T-cell (primary cell): ENCODE measurements at regions of chr4 and their contacts with region 1.

Region 1: DNA sequence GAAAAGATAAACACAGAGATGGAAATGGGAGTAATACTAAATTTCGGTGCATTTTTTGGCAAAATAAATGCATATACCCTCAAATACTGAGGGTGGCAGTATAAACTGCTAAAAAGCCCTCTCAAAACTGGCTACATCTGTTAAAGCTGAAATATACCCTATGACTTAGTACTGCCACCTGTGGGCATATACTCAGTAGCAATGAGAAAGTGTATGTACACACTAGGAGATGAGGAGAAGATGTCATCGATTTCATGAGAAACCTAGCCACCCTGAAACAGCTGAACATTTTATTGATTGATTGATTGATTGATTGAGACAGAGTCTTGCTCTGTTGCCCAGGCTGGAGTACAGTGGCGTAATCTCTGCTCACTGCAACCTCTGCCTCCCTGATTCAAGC is 12.2 kb upstream of the TMEM128 start:
- DNase-seq: peak in 8 of 35 experiments; percentile 8 to 79 (median 19)
- ATAC-seq: peak; percentile 92 to 100 (median 96)
- H3K4me3 ChIP-seq: no peak overlapping the region
- H3K4me3 Mint-ChIP-seq: no peak overlapping the region
- H3K27ac ChIP-seq: no peak overlapping the region
- H3K27ac Mint-ChIP-seq: peak overlapping the region; percentile 16 to 61
- H3K4me1 ChIP-seq: peaks cover 0 to 7% of the 10 kb centered on the region in 2 experiments
- H3K4me1 Mint-ChIP-seq: peaks cover 0 to 11% (median 10%) of the 10 kb centered on the region in 3 donors
- H3K27me3 ChIP-seq: no peaks in the 10 kb centered on the region
- H3K27me3 Mint-ChIP-seq: peaks cover 0 to 3% of the 10 kb centered on the region in 2 donors

Region 2: DNA sequence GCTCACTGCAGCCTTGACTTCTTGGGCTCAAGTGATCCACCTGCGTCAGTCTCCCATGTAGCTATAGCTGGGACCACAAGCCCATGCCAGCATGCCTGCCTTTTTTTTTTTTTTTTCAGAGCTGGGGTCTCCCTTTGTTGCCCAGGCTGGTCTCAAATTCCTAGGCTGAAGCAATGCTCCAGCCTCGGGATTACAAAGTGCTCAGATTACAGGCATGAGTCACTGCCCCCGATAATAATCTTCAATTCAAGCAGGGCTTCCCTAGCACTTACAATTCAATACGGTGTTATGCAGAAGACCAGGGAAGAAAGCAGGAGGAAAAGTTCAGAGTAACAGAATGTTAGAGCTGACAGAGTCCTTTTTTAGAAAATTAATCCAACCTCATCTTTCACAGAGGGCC is 59.6 kb before region 1 on chr4:
- CTCF ChIA-PET with region 1: no interaction called
- POLR2A ChIA-PET with region 1: no interaction called
- DNase-seq: no peak
- ATAC-seq: no peak
- H3K4me3 ChIP-seq: no peak overlapping the region
- H3K4me3 Mint-ChIP-seq: no peak overlapping the region
- H3K27ac ChIP-seq: no peak overlapping the region
- H3K27ac Mint-ChIP-seq: no peak overlapping the region
- H3K4me1 ChIP-seq: no peaks in the 10 kb centered on the region
- H3K4me1 Mint-ChIP-seq: no peaks in the 10 kb centered on the region
- H3K27me3 ChIP-seq: peaks cover 2 to 38% of the 10 kb centered on the region in 2 experiments
- H3K27me3 Mint-ChIP-seq: peaks cover 14 to 42% of the 10 kb centered on the region in 2 donors

Region 3: GRCh38 chr4:4233610-4234009 is 26.6 kb before region 1 on chr4:
- CTCF ChIA-PET with region 1: no interaction called
- POLR2A ChIA-PET with region 1: no interaction called
- DNase-seq: no peak
- ATAC-seq: no peak
- H3K4me3 ChIP-seq: no peak overlapping the region
- H3K4me3 Mint-ChIP-seq: no peak overlapping the region
- H3K27ac ChIP-seq: no peak overlapping the region
- H3K27ac Mint-ChIP-seq: no peak overlapping the region
- H3K4me1 ChIP-seq: no peaks in the 10 kb centered on the region
- H3K4me1 Mint-ChIP-seq: no peaks in the 10 kb centered on the region
- H3K27me3 ChIP-seq: peaks cover 4 to 15% of the 10 kb centered on the region in 2 experiments
- H3K27me3 Mint-ChIP-seq: peaks cover under 1 to 8% of the 10 kb centered on the region in 2 donors

Region 4: DNA sequence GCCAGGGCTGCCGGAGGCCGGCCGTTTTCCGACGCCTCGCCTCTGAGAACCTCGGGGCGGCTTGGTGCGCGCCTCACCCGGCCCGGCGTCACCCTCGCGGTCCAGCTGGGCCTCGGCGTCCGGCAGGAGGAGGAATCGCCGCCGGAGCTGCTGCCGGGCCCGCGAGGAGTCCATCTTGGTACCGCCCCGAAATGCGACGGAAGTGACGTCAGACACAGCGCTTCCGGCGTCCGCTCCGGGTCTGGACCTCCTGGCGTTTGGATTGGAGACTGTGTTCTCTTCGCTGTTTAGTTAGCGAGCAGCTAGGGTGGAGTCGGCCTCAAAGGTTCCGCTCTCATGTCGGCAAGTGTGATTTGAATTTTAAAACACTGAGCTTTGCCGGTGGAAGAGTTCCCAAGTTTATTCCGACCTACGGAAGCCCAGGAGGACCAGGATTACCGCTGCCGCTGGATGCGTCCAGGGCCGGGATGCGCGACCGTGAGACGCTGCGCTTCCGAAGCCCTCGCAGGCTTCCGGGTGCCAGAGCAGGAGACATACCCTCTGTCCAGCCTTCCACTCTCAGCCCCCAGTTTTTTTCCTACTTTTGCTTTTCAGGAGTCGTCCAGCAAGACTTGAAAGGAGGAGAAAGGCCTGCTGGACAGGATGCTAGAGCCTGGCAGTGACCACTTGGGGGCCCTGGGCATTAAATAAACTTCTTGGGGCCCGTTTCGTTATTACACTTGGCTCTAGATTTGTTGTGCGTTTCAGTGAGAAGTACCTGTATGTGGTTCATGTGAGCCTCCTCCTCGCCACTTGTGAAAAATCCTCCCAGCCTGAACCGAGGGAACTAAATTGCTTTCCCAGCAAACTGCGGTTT is 12.0 kb before region 1 on chr4 and contains the start of gene TMEM128:
- CTCF ChIA-PET with region 1: interaction called, 8 to 12 read pairs
- POLR2A ChIA-PET with region 1: interaction called in 1 of 2 experiments, 3 read pairs
- DNase-seq: peak; percentile 80 to 96 (median 90)
- ATAC-seq: peak; percentile 94 to 98 (median 96)
- H3K4me3 ChIP-seq: peak within 1 kb of the TSS; percentile 94 to 97
- H3K4me3 Mint-ChIP-seq: peak within 1 kb of the TSS; percentile 94 to 97 (median 96)
- H3K27ac ChIP-seq: peak within 1 kb of the TSS; percentile 95
- H3K27ac Mint-ChIP-seq: peak within 1 kb of the TSS; percentile 97
- H3K4me1 ChIP-seq: peaks cover 6 to 13% of the 10 kb centered on the region in 2 experiments
- H3K4me1 Mint-ChIP-seq: peaks cover 35 to 40% (median 40%) of the 10 kb centered on the region in 3 donors
- H3K27me3 ChIP-seq: no peaks in the 10 kb centered on the region
- H3K27me3 Mint-ChIP-seq: no peaks in the 10 kb centered on the region
- total RNA-seq, gene TMEM128: 9.9 to 22.8 (median 16.7) TPM

Region 5: GRCh38 chr4:4334798-4335520 is 74.7 kb after region 1 on chr4:
- CTCF ChIA-PET with region 1: interaction called in 1 of 2 experiments, 14 read pairs
- POLR2A ChIA-PET with region 1: no interaction called
- DNase-seq: peak; percentile 50 to 83 (median 68)
- ATAC-seq: peak; percentile 84 to 97 (median 94)
- H3K4me3 ChIP-seq: no peak overlapping the region
- H3K4me3 Mint-ChIP-seq: no peak overlapping the region
- H3K27ac ChIP-seq: no peak overlapping the region
- H3K27ac Mint-ChIP-seq: no peak overlapping the region
- H3K4me1 ChIP-seq: peaks cover 0 to 6% of the 10 kb centered on the region in 2 experiments
- H3K4me1 Mint-ChIP-seq: peaks cover 8 to 13% (median 8%) of the 10 kb centered on the region in 3 donors
- H3K27me3 ChIP-seq: no peaks in the 10 kb centered on the region
- H3K27me3 Mint-ChIP-seq: no peaks in the 10 kb centered on the region

Region 6: GRCh38 chr4:4430492-4431197 is 170.4 kb after region 1 on chr4:
- CTCF ChIA-PET with region 1: interaction called, 8 to 21 read pairs
- POLR2A ChIA-PET with region 1: no interaction called
- DNase-seq: peak in 32 of 35 experiments; percentile 18 to 72 (median 46)
- ATAC-seq: peak; percentile 82 to 91 (median 86)
- H3K4me3 ChIP-seq: no peak overlapping the region
- H3K4me3 Mint-ChIP-seq: no peak overlapping the region
- H3K27ac ChIP-seq: no peak overlapping the region
- H3K27ac Mint-ChIP-seq: no peak overlapping the region
- H3K4me1 ChIP-seq: no peaks in the 10 kb centered on the region
- H3K4me1 Mint-ChIP-seq: peaks cover 0 to 8% (median 6%) of the 10 kb centered on the region in 3 donors
- H3K27me3 ChIP-seq: no peaks in the 10 kb centered on the region
- H3K27me3 Mint-ChIP-seq: no peaks in the 10 kb centered on the region